SK-N-SH (cell line): ENCODE measurements at regions of chr11 and their contacts with region 1.

Region 1: DNA sequence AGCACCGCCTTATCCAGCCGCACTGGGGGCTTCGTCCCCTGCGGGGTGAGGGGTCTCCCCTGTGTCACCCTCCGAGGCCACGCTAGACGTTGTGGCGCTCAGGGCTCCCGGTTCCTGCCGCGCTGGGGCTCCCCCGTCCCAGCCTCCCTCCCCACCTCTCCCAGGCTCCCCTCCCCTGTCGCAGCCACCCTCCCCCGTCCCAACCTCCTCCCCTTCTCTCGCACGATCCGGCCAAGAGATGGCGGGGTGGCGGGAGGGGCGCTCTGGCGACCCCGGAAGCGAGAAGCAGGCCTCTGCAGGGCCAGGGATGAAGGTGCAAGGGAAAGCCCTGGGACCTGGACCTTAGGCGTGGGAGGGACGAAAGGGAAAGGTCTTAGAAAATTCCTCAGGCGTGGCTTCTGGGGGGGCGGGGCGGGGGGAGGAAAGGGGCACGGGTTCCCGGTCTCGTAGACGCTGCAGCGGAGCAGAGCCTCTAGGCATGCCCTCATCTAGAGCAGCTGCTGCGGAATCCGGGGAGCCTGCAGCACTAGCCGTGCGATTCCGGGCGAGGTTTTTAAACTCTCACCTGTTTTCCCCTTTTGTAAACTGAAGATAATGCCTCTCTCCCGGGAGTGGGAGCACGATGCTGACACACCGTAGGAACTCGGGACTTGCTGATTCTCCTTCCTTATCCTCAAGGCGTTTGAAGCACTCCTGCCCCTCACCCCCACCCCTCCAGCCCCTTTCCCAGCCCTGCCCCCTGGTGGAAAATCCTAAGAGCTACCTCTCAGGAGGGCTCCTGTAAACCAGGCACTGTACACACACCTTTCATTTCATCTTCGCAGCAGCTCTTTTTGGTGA is 14.4 kb downstream of the KCNJ5 start:
- DNase-seq: peak; percentile 86
- H3K4me3 ChIP-seq: peak overlapping the region; percentile 46 to 53
- H3K27ac ChIP-seq: no peak overlapping the region; a peak in 1 of 4 replicates
- H3K4me1 ChIP-seq: peaks cover 16 to 26% of the 10 kb centered on the region in 2 experiments; a peak in 3 of 4 replicates
- H3K27me3 ChIP-seq: no peaks in the 10 kb centered on the region
- CTCF ChIP-seq: peak; percentile 54
- EP300 ChIP-seq: no peak
- RAD21 ChIP-seq: no peak

Region 2: GRCh38 chr11:128701086-128701485 is 204.5 kb before region 1 on chr11:
- CTCF ChIA-PET with region 1: no interaction called
- POLR2A ChIA-PET with region 1: no interaction called
- DNase-seq: no peak
- H3K4me3 ChIP-seq: no peak overlapping the region
- H3K27ac ChIP-seq: peak overlapping the region in 1 of 2 experiments; percentile 51; a peak in 1 of 4 replicates
- H3K4me1 ChIP-seq: 0 out of 4 replicates have a peak, but pooled peaks cover 0 to 10% of the 10 kb centered on the region in 2 experiments
- H3K27me3 ChIP-seq: no peaks in the 10 kb centered on the region
- CTCF ChIP-seq: no peak
- EP300 ChIP-seq: no peak
- RAD21 ChIP-seq: no peak

Region 3: GRCh38 chr11:128874427-128874826 is 31.1 kb before region 1 on chr11:
- CTCF ChIA-PET with region 1: no interaction called
- POLR2A ChIA-PET with region 1: no interaction called
- DNase-seq: no peak
- H3K4me3 ChIP-seq: no peak overlapping the region
- H3K27ac ChIP-seq: no peak overlapping the region
- H3K4me1 ChIP-seq: peaks cover 0 to 6% of the 10 kb centered on the region in 2 experiments; a peak in 1 of 4 replicates
- H3K27me3 ChIP-seq: no peaks in the 10 kb centered on the region
- CTCF ChIP-seq: no peak
- EP300 ChIP-seq: no peak
- RAD21 ChIP-seq: no peak

Region 4: DNA sequence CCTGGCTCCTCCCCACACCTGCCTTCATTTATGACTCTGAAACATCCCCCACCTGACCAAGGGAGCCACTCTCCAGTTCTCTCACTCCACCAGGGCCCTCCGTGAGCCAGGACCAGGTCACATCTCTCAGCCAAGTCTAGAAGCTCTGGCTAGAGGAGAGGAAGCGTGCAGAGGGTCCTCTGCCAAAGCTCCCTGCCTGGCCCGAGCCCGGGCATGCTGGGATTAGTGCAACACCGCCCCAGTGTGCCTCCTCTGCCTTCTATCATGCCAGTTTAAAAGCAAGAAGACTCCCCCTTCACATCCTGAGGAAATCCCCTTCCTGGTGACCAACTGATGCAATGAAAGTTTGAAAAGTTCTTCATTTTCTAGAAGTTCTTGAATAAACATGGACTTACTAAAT is 13.7 kb after region 1 on chr11:
- CTCF ChIA-PET with region 1: interaction called, 12 read pairs
- POLR2A ChIA-PET with region 1: no interaction called
- DNase-seq: no peak
- H3K4me3 ChIP-seq: no peak overlapping the region
- H3K27ac ChIP-seq: no peak overlapping the region
- H3K4me1 ChIP-seq: no peaks in the 10 kb centered on the region; a peak in 1 of 4 replicates
- H3K27me3 ChIP-seq: peaks cover 5% of the 10 kb centered on the region; the same call in 1 of the 2 replicates
- CTCF ChIP-seq: no peak
- EP300 ChIP-seq: no peak
- RAD21 ChIP-seq: no peak